Activated B cell treated with CpG ODN at 0.5 μM for 24 hours (primary cell): ENCODE measurements at regions of chr2 and their contacts with region 1.

Region 1: GRCh38 chr2:237474931-237475703 is 11.9 kb upstream of the MLPH start:
- DNase-seq: peak; percentile 89
- ATAC-seq: peak; percentile 91
- H3K4me3 Mint-ChIP-seq: peak overlapping the region; percentile 87
- H3K27ac Mint-ChIP-seq: peak overlapping the region; percentile 84
- H3K4me1 Mint-ChIP-seq: peaks cover 8% of the 10 kb centered on the region
- H3K27me3 Mint-ChIP-seq: peaks cover 30% of the 10 kb centered on the region
- CTCF ChIP-seq: peak; percentile 27

Region 2: DNA sequence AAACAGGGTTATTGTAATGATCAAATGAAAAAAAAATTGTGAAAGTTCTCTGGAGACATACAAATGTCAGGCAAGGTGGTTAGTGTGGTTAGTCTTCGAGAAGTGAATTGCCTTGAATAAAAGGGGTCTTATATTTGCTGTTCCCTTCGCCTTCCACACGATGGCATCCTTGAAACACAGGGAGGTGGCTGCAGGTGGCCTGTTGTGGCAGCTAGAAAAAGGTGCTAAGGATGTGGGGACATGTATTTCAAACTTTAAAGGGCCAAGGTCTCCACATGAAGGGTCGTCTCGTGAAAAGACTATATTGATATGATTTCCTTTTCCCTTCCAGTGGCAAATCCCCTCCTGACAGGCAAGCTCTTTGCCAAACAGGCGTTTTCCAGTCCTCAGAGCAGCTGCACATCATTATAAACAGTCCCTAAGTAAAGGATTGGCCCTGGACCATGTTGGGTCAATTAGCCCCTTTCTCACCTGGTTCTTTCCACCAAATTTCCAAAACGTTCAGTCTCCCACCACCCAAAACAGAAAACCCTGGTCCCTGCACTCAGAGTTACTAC is 321.0 kb before region 1 on chr2:
- CTCF ChIA-PET with region 1: no interaction called
- POLR2A ChIA-PET with region 1: no interaction called
- intact Hi-C with region 1: loop called (anchors 1 kb)
- DNase-seq: no peak
- ATAC-seq: no peak
- H3K4me3 Mint-ChIP-seq: no peak overlapping the region
- H3K27ac Mint-ChIP-seq: no peak overlapping the region
- H3K4me1 Mint-ChIP-seq: no peaks in the 10 kb centered on the region
- H3K27me3 Mint-ChIP-seq: peaks cover 4% of the 10 kb centered on the region
- CTCF ChIP-seq: no peak

Region 3: DNA sequence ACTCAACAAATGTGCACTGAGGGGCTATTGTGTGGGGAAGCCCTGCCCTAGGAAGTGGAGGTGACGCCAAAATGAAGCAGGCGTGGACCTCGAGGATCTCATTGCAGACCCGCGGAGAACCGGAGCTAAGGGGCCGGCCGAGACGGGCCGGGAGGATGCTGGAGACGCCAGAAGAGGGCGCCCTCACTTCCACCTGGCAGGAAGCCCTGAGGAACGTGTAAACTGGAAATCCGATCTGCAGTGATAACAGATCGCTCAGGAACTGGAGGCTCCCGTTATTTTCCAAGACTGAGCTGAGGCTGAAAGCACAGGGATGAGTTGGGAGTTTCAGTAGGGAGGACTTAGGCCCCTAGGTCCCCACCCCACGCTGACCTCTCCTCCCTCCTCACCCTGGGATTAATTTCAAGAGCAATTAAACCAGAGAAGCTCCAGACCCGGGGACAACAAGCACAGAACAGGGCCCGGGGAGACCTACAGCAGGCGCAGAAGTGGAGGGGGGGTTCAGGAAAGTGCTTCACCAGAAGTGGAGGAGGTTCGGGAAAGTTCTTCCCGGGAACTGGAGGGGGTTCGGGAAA is 53.5 kb before region 1 on chr2:
- CTCF ChIA-PET with region 1: interaction called, 20 read pairs
- POLR2A ChIA-PET with region 1: interaction called, 3 read pairs
- intact Hi-C with region 1: loop called (anchors 1 kb)
- DNase-seq: peak; percentile 27
- ATAC-seq: no peak
- H3K4me3 Mint-ChIP-seq: no peak overlapping the region
- H3K27ac Mint-ChIP-seq: no peak overlapping the region
- H3K4me1 Mint-ChIP-seq: peaks cover 4% of the 10 kb centered on the region
- H3K27me3 Mint-ChIP-seq: peaks cover 33% of the 10 kb centered on the region
- CTCF ChIP-seq: no peak

Region 4: DNA sequence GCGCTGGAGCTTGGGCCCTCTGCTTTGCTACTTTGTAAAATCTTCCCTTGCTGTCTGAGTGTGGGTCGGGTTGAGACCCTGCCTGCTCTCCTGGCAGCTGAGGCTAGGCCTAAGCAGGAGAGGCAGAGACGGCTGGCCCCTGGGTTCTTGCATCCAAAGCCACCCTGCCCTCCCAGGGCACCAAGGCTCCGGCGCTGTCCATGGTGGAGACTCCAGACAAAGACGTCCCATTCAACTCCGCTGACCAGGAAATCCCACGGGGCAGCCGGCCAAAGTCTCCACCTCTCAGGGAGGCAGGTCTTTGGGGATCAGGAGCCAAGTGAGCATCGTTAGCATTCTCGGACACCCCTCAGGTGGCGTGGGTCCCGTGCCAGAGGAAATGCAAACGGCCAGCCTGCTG is 88.7 kb after region 1 on chr2:
- CTCF ChIA-PET with region 1: no interaction called
- POLR2A ChIA-PET with region 1: no interaction called
- intact Hi-C with region 1: no loop called
- DNase-seq: no peak
- ATAC-seq: no peak
- H3K4me3 Mint-ChIP-seq: no peak overlapping the region
- H3K27ac Mint-ChIP-seq: no peak overlapping the region
- H3K4me1 Mint-ChIP-seq: no peaks in the 10 kb centered on the region
- H3K27me3 Mint-ChIP-seq: peaks cover 14% of the 10 kb centered on the region
- CTCF ChIP-seq: no peak